ENCODE measurements at regions of chr9 and their contacts with region 1.

Region 1: GRCh38 chr9:127224178-127224882 is 40.2 kb upstream of the GARNL3 start:
- DNase-seq: peak; percentile 80 to 97
- H3K4me3 ChIP-seq: peak overlapping the region; percentile 85
- H3K27ac ChIP-seq: 0 out of 2 replicates have a peak overlapping the region, but pooled peaks have one; percentile 36
- H3K4me1 ChIP-seq: no peaks in the 10 kb centered on the region
- H3K27me3 ChIP-seq: no peaks in the 10 kb centered on the region
- CTCF ChIP-seq: no peak

Region 2: DNA sequence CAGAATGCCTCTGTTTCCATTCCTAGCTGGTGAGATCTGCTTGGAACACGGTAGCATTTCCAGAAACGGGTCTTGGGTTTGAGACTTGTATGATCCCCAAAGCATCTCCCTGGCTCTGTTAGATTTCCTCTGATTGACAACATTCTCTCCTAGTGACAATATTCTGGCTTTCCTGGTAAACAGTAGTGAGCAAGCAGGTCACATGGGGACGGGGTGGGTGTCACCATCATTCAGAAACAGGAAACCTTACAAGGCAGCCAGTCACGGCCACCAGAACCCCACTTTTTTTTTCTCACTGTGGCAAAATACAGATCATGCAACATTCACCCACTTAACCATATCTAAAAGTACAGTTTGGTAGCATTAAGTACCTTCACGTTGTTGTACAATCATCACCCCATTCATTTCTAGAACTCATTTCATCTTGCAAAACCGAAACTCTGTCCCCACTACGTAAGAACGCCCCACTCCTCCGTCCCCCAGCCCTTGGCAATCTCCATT is 700.7 kb before region 1 on chr9:
- CTCF ChIA-PET with region 1: no interaction called
- POLR2A ChIA-PET with region 1: interaction called, 20 read pairs
- intact Hi-C with region 1: no loop called
- DNase-seq: no peak
- H3K4me3 ChIP-seq: no peak overlapping the region
- H3K27ac ChIP-seq: no peak overlapping the region
- H3K4me1 ChIP-seq: no peaks in the 10 kb centered on the region
- H3K27me3 ChIP-seq: peaks cover 86% of the 10 kb centered on the region
- CTCF ChIP-seq: no peak

Region 3: GRCh38 chr9:127123064-127123935 is 101.0 kb before region 1 on chr9:
- CTCF ChIA-PET with region 1: no interaction called
- POLR2A ChIA-PET with region 1: interaction called, 16 read pairs
- intact Hi-C with region 1: no loop called
- DNase-seq: no peak
- H3K4me3 ChIP-seq: no peak overlapping the region
- H3K27ac ChIP-seq: no peak overlapping the region
- H3K4me1 ChIP-seq: peaks cover 1% of the 10 kb centered on the region; the same call in 1 of the 2 replicates
- H3K27me3 ChIP-seq: no peaks in the 10 kb centered on the region
- CTCF ChIP-seq: no peak

Region 4: DNA sequence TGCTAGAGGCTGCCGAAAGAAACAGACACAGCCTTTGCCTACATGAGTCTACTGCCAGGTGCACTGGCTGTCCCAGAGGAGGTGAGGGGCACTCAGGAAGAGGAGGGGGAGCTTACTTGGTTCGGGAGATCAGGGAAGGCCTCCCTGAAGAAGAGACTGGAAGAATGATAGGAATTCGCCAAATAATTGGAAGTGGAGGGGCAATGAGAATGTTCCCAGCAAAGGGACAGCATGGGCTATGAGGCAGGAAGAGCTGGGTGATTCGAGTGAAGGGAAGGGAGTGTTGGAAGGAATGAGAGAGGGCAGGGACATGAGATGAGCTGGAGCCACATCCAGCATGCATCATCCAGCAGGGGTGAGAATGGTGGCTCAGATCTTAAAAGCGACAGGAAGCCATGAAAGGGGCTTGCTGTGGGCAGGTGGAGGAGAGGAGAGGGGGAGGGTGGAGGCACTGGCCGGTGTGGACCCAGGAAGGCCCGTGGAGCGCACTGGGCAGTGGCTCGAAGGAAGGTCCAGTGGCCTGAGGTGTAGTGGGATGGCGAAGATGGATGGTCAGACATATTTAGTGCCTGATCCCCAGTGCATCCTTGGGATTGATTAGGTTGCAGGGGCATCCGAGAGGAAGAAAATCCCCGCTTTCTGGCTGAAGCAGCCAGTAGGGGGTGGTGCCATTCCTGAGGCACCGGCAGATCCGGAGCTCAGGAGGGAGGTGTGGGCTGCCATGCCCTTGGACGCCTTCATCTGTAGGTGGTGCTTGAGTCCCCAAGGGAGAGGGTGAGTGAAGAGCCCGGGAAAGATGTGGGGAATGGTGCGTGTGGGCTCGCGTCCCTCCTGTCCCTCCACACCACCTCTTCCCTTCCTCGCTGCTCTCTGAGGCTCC is 13.2 kb before region 1 on chr9:
- CTCF ChIA-PET with region 1: no interaction called
- POLR2A ChIA-PET with region 1: no interaction called
- intact Hi-C with region 1: no loop called
- DNase-seq: no peak
- H3K4me3 ChIP-seq: no peak overlapping the region
- H3K27ac ChIP-seq: no peak overlapping the region
- H3K4me1 ChIP-seq: 0 out of 2 replicates have a peak, but pooled peaks cover 4% of the 10 kb centered on the region
- H3K27me3 ChIP-seq: no peaks in the 10 kb centered on the region
- CTCF ChIP-seq: no peak

Region 5: GRCh38 chr9:127444283-127444920 is 220.1 kb after region 1 on chr9:
- CTCF ChIA-PET with region 1: no interaction called
- POLR2A ChIA-PET with region 1: interaction called, 14 read pairs
- intact Hi-C with region 1: no loop called
- DNase-seq: no peak
- H3K4me3 ChIP-seq: no peak overlapping the region
- H3K27ac ChIP-seq: no peak overlapping the region
- H3K4me1 ChIP-seq: 0 out of 2 replicates have a peak, but pooled peaks cover 12% of the 10 kb centered on the region
- H3K27me3 ChIP-seq: no peaks in the 10 kb centered on the region
- CTCF ChIP-seq: no peak

Region 6: DNA sequence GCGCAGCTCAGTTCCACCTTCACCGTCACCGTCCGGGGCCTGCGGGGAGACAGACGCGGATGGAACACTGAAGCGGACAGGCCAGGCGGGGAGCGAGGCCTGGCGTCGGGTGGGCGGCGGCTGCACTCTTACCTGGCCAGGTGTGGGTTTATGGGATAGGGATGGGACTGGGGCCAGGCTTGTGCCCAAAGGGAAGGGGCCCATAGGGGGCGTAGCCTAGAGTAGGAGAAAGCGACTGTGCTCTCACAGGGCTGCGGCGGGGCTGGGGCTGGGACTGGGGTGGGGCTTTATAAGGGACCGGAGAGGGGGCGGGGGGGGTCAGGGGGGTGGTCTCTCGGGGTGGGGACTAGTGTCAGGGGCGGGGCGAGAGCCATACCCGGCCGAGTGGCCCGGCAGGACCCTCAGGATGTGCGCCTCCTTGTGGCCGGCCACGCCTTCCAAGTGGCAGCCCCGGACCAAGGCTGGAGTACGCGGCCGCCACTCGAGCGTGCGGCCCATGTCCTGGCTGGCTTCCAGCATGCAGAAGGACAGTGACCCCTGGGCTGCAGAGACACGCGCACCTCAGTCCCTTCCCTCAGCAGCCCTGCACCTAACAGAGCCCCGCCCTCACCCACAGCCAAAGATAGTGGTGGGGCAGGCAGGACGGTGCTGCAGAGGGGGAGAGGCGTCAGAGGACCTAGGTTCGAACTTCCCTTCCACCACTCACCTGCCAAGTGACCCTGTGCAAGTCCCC is 601.2 kb after region 1 on chr9:
- CTCF ChIA-PET with region 1: interaction called, 15 read pairs
- POLR2A ChIA-PET with region 1: no interaction called
- intact Hi-C with region 1: no loop called
- DNase-seq: no peak
- H3K4me3 ChIP-seq: no peak overlapping the region
- H3K27ac ChIP-seq: no peak overlapping the region
- H3K4me1 ChIP-seq: no peaks in the 10 kb centered on the region
- H3K27me3 ChIP-seq: no peaks in the 10 kb centered on the region
- CTCF ChIP-seq: no peak